CD4-positive, alpha-beta memory T cell (primary cell): ENCODE measurements at regions of chr12 and their contacts with region 1.

Region 1: DNA sequence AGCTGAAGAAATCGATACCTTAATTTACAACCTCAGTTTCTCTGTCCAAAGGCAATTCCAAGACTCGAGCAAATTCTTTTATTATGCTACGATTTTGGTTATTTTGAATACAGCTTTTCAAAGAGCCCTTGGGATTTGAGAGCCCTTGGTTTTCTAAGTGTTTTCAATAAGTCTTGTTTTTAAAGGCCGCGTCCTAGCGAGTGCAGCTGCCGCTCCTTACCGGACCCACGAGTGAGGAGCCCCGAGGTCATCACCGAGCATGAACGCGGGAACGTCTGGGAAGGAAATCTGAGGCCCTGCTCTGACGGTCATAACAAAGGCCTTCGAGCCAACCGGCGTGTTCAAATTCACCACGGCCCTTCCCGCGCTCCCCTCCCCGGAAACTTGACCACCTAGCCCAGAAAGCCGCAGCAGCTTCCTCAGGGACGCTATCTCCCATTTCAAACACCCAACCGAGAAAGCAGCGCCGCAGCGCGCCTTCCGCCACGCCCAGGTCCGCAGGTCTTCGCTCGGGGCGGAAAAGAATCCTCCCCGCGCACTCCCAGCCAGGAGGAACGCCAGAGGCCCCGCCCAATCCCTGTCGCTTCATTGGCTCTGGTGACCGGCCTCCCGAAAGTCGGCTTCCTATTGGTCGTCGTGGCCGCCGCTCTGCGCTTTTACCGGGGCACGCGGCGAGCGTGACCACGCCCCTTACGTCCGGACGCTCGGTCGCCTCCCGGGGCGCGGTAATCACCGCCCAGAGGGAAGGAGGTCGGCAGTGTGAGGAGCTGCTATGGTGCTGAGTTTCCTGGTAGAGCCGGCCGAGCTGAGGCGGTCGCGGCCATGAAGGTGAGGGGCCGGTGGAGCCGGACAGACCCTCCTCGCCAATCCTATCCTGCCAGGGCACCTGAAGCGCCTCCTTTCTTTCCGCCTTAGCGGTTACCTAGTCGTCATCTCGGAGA is at the start of gene RNF34:
- DNase-seq: peak; percentile 96 to 98 (median 97)
- H3K4me3 ChIP-seq: peak within 1 kb of the TSS; percentile 25 to 78
- H3K4me3 Mint-ChIP-seq: peak within 1 kb of the TSS; percentile 89 to 99 (median 94)
- H3K27ac ChIP-seq: peak within 1 kb of the TSS; percentile 87
- H3K27ac Mint-ChIP-seq: peak within 1 kb of the TSS; percentile 95 to 98 (median 96)
- H3K4me1 ChIP-seq: peaks cover 42% of the 10 kb centered on the region
- H3K4me1 Mint-ChIP-seq: peaks cover 21 to 47% (median 32%) of the 10 kb centered on the region in 4 donors
- H3K27me3 ChIP-seq: no peaks in the 10 kb centered on the region
- H3K27me3 Mint-ChIP-seq: no peaks in the 10 kb centered on the region
- total RNA-seq, gene RNF34: 88.6 to 95.3 TPM

Region 2: GRCh38 chr12:121240484-121241101 is 159.1 kb before region 1 on chr12:
- CTCF ChIA-PET with region 1: no interaction called
- POLR2A ChIA-PET with region 1: interaction called, 10 read pairs
- intact Hi-C with region 1: no loop called
- DNase-seq: peak; percentile 94 to 98 (median 95)
- H3K4me3 ChIP-seq: peak overlapping the region; percentile 47 to 54
- H3K4me3 Mint-ChIP-seq: peak overlapping the region; percentile 82 to 92 (median 90)
- H3K27ac ChIP-seq: peak overlapping the region; percentile 76
- H3K27ac Mint-ChIP-seq: peak overlapping the region; percentile 95 to 100 (median 99)
- H3K4me1 ChIP-seq: peaks cover 38% of the 10 kb centered on the region
- H3K4me1 Mint-ChIP-seq: peaks cover 26 to 55% (median 38%) of the 10 kb centered on the region in 4 donors
- H3K27me3 ChIP-seq: no peaks in the 10 kb centered on the region
- H3K27me3 Mint-ChIP-seq: no peaks in the 10 kb centered on the region

Region 3: GRCh38 chr12:121334513-121335343 is 64.9 kb before region 1 on chr12:
- CTCF ChIA-PET with region 1: interaction called, 14 read pairs
- POLR2A ChIA-PET with region 1: interaction called, 10 read pairs
- intact Hi-C with region 1: loop called (anchors 1 kb)
- DNase-seq: peak in 4 of 5 donors; percentile 52 to 58 (median 56)
- H3K4me3 ChIP-seq: no peak overlapping the region
- H3K4me3 Mint-ChIP-seq: no peak overlapping the region
- H3K27ac ChIP-seq: peak overlapping the region; percentile 17
- H3K27ac Mint-ChIP-seq: peak overlapping the region in 6 of 7 donors; percentile 36 to 89 (median 60)
- H3K4me1 ChIP-seq: peaks cover 4% of the 10 kb centered on the region
- H3K4me1 Mint-ChIP-seq: peaks cover 2 to 6% (median 4%) of the 10 kb centered on the region in 4 donors
- H3K27me3 ChIP-seq: no peaks in the 10 kb centered on the region
- H3K27me3 Mint-ChIP-seq: no peaks in the 10 kb centered on the region

Region 4: GRCh38 chr12:121443193-121443870 is 43.7 kb after region 1 on chr12:
- CTCF ChIA-PET with region 1: interaction called, 14 read pairs
- POLR2A ChIA-PET with region 1: interaction called, 7 read pairs
- intact Hi-C with region 1: no loop called
- DNase-seq: peak; percentile 44 to 60 (median 50)
- H3K4me3 ChIP-seq: no peak overlapping the region
- H3K4me3 Mint-ChIP-seq: no peak overlapping the region
- H3K27ac ChIP-seq: no peak overlapping the region
- H3K27ac Mint-ChIP-seq: peak overlapping the region in 4 of 7 donors; percentile 42 to 87 (median 68)
- H3K4me1 ChIP-seq: no peaks in the 10 kb centered on the region
- H3K4me1 Mint-ChIP-seq: peaks cover 0 to 5% (median 3%) of the 10 kb centered on the region in 4 donors
- H3K27me3 ChIP-seq: no peaks in the 10 kb centered on the region
- H3K27me3 Mint-ChIP-seq: no peaks in the 10 kb centered on the region

Region 5: GRCh38 chr12:121839106-121839992 is 439.7 kb after region 1 on chr12:
- CTCF ChIA-PET with region 1: no interaction called
- POLR2A ChIA-PET with region 1: no interaction called
- intact Hi-C with region 1: loop called (anchors 1 kb)
- DNase-seq: peak; percentile 99 to 100 (median 99)
- H3K4me3 ChIP-seq: peak overlapping the region; percentile 70 to 95
- H3K4me3 Mint-ChIP-seq: peak overlapping the region; percentile 96 to 99 (median 99)
- H3K27ac ChIP-seq: peak overlapping the region; percentile 46
- H3K27ac Mint-ChIP-seq: peak overlapping the region; percentile 86 to 97 (median 93)
- H3K4me1 ChIP-seq: peaks cover 9% of the 10 kb centered on the region
- H3K4me1 Mint-ChIP-seq: peaks cover 10 to 23% (median 14%) of the 10 kb centered on the region in 4 donors
- H3K27me3 ChIP-seq: no peaks in the 10 kb centered on the region
- H3K27me3 Mint-ChIP-seq: no peaks in the 10 kb centered on the region